ENCODE measurements at regions of chr14 and their contacts with region 1.

Region 1: DNA sequence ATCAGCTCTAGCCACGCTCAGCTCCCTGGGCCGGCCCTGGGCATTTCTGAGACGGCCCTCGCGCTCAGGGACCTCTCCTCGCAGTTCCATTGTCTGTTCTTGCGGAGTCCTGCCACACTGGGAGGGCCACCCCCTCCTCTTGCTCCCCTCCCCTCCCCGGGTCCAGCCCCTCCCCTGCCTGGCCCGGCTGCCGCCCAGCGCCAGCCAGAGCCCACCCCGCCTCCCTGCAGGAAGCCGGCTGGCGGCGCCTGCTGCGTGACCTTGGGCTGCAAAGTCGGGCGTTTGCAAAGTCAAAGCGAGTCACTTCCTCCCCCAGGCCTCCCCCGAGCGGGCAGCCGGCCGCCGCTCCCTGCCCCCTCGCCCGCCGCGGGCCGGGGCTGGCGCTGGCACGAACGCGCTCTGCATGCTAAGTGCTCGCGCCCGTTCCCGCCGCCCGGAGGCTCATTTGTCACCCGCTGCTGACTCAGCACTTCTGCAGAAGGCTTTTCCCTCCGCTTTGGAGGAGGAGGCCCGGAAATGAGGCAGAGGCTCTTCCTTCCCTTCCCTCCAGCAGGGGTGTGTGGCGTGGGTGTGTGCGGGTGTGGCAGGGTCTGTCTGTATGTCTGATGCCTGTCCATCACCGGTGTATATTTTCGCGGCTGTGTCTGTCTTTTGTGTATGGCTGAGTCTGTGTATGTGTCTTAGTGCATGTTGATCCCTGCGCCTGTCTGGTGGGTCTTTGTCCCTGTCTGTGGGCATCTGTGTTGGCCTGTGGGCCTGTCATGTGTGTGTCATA is 72.0 kb downstream of the IRF2BPL start:
- DNase-seq: peak; percentile 96
- H3K4me3 ChIP-seq: peak overlapping the region in 1 of 3 donors; percentile 15
- H3K27ac ChIP-seq: peak overlapping the region; percentile 95 to 98 (median 97)
- H3K4me1 ChIP-seq: peaks cover 51 to 68% of the 10 kb centered on the region in 2 donors
- H3K27me3 ChIP-seq: no peaks in the 10 kb centered on the region
- CTCF ChIP-seq: peak in 4 of 6 experiments; percentile 17 to 33 (median 28)
- POLR2A ChIP-seq: peak in 1 of 2 donors; percentile 68

Region 2: DNA sequence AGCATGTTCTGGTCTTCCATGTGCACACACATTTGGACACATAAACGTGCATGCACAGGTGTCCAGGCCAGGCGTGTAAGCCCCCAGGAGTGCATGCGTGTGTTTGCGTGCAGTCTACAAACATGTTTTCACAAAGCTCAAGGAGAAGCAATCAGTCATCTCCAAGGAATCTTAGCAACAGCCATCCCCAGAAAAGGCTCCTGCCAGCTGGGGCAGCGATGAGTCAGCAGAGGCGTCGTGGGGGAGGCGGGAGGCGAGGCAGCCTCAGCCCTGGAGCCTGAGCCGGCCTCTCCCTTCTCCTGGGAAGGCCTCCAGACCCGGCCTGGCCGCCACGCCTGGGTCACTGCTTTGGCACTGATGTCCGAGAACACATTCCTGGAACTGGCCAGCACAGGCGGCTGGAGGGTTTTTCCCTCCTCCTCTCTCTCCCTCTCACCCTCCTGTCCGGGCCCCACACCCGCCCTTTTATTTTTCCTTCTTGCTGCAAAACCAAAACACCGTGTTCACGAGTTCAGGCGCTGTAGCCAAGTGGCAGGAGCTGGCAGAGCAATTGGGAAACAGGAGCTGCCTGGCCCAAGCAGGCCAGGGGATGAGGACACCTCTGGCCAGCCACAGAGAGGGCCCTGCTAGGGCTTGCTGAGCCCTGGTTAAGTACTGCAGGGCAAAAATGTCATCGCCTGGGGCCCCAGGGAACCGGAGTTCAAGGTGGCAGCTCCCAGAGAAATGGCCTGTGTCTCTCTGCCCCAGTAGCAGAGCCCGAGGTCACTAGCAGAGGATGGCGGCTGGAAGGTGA is 37.6 kb before region 1 on chr14:
- intact Hi-C with region 1: loop called (anchors 5 kb)
- DNase-seq: peak; percentile 98
- H3K4me3 ChIP-seq: no peak overlapping the region
- H3K27ac ChIP-seq: peak overlapping the region; percentile 94 to 98 (median 97)
- H3K4me1 ChIP-seq: peaks cover 39 to 63% of the 10 kb centered on the region in 2 donors
- H3K27me3 ChIP-seq: no peaks in the 10 kb centered on the region
- CTCF ChIP-seq: peak in 2 of 6 experiments; percentile 33
- POLR2A ChIP-seq: peak in 1 of 2 donors; percentile 66

Region 3: GRCh38 chr14:77028384-77029231 is 72.1 kb after region 1 on chr14 and contains the start of gene IRF2BPL:
- intact Hi-C with region 1: loop called (anchors 5 kb)
- DNase-seq: peak; percentile 98 to 99
- H3K4me3 ChIP-seq: peak within 1 kb of the TSS; percentile 41 to 66 (median 50)
- H3K27ac ChIP-seq: peak within 1 kb of the TSS; percentile 100
- H3K4me1 ChIP-seq: peaks cover 49 to 66% of the 10 kb centered on the region in 2 donors
- H3K27me3 ChIP-seq: no peaks in the 10 kb centered on the region
- CTCF ChIP-seq: no peak
- POLR2A ChIP-seq: peak; percentile 93 to 100
- total RNA-seq, gene IRF2BPL: 43.9 to 103 (median 78.4) TPM

Measured in thyroid gland (tissue), 4 donors.